ENCODE measurements at regions of chr3 and their contacts with region 1.

Region 1: DNA sequence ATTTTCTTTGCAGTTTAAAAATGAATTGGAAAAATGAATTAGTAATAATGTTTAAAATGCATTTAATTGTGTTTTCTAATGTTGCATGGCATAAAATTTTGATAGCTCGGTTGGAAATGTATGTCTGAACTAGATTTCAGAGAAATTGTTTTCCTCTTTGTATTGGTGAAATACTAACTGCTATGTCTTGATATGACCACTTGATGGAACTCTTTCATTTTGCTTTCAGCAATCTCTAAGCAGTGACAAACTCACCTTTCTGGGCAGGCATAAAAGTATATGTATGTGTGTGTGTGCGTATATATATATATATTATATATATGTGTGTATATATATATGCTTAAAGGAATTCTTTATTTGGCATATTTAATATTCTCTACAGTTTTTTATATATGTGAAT is 239.3 kb upstream of the ZNF717 start:
- DNase-seq: no peak
- ATAC-seq: no peak
- H3K4me3 ChIP-seq: no peak overlapping the region
- H3K27ac ChIP-seq: no peak overlapping the region
- H3K4me1 ChIP-seq: no peaks in the 10 kb centered on the region
- H3K27me3 ChIP-seq: no peaks in the 10 kb centered on the region

Region 2: DNA sequence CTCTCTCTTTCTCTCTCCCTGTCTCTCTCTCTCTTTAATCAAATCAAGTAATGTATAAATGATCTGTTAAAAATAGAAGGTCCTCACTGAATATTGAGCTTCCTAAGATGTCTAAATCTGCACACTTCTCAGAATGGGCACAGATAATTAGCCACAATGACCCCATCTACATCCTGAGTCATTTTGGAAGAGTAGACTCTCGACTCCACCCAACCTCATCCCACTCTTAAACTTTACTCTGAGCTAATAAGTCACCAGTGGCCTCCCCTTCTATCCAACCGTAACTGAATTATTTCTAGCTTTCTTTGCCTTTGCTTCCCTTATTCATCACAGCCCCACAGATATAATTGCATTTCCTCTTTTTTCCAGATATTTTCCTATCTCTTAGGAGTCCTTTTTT is 87.2 kb after region 1 on chr3:
- intact Hi-C with region 1: loop called in 1 of 2 experiments (anchors 10 kb)
- DNase-seq: no peak
- ATAC-seq: no peak
- H3K4me3 ChIP-seq: no peak overlapping the region
- H3K27ac ChIP-seq: no peak overlapping the region
- H3K4me1 ChIP-seq: no peaks in the 10 kb centered on the region
- H3K27me3 ChIP-seq: no peaks in the 10 kb centered on the region